OCI-LY7 (cell line): ENCODE measurements at regions of chr14 and their contacts with region 1.

Region 1: GRCh38 chr14:104078031-104078455 is 7.5 kb upstream of the ASPG start:
- DNase-seq: peak; percentile 92
- H3K4me3 ChIP-seq: no peak overlapping the region
- H3K27ac ChIP-seq: no peak overlapping the region
- H3K4me1 ChIP-seq: peaks cover 5% of the 10 kb centered on the region
- CTCF ChIP-seq: peak; percentile 100

Region 2: GRCh38 chr14:104130974-104131651 is 53.1 kb after region 1 on chr14:
- CTCF ChIA-PET with region 1: interaction called, 3 read pairs
- POLR2A ChIA-PET with region 1: no interaction called
- intact Hi-C with region 1: loop called (anchors 1 kb)
- DNase-seq: peak; percentile 54
- H3K4me3 ChIP-seq: no peak overlapping the region
- H3K27ac ChIP-seq: no peak overlapping the region
- H3K4me1 ChIP-seq: no peaks in the 10 kb centered on the region
- CTCF ChIP-seq: peak; percentile 79

Region 3: DNA sequence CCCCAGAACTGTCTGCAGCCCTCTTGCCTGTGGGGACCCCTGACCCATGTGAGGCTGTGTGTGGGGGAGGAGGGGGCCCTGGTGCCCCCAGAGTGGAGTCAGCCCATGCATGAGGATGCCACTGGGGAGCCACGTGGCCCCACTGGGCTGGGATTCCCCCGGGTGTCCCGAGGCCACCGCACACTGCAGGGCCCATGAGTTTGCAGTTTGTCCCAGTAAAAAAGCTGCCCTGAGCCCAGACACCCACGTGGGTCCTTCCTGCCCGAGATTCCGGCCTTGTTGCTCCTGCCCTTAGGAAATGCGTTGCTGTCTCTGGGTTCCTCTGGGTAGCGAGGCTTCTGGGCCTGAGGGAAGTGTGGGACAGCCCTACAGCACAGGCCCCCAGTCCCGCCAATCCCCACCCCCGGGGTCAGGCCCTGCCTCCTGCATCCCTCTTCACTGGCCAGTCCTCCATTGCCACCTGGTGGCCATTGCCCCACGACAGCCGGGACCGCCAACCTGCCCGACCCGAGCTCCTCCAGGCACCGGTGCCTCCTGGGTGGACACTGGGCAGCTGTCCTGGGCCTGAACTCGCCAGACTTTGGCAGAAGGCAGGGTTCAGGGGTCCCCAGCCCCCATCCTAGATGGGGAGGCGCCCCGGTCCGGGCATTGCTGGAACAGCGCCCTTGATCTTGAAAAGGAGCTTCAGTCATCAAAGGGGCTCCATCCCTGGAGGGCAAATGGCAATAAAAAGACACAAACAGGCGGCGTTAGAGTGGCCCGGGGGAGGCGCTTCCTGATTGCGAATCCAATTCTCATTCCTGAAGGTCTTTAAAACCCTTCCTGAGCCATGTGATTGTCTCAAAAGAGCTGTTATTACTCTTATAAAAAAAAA is 485.9 kb after region 1 on chr14:
- CTCF ChIA-PET with region 1: no interaction called
- POLR2A ChIA-PET with region 1: no interaction called
- intact Hi-C with region 1: loop called (anchors 2 kb)
- DNase-seq: peak; percentile 38
- H3K4me3 ChIP-seq: no peak overlapping the region
- H3K27ac ChIP-seq: no peak overlapping the region
- H3K4me1 ChIP-seq: no peaks in the 10 kb centered on the region
- CTCF ChIP-seq: peak; percentile 75

Region 4: DNA sequence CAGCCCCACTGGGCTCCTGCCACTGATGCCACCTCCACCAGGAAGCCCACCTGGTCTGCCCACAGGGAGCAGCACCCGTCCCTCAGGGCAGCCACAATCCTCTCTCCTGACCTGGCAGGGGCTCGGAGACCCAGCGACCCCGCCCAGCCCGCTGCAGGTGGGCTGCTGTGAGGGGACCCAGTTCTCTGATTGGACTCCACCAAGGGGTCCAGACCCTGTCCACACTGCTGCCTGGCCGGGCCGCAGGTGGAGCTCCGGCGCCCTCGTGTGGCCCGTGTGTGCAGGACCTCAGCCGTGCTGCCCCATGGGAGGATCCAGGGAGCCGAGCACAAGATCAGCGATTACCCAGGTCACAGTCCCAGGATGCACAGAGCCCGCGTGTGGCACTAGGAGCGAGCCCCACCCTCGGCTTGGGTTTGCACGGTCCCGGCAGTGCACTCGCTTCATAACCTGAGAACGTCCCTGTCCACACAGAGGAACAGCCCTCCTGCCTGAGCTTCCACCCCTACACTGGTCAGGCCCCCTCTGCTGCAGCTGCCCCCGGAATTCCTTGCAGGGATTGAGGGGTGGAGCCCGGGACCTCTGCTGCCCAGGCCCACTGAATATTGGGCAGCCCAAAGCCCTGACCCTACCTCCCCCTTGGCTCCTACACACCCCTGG is 562.0 kb after region 1 on chr14:
- CTCF ChIA-PET with region 1: no interaction called
- POLR2A ChIA-PET with region 1: no interaction called
- intact Hi-C with region 1: loop called (anchors 10 kb)
- DNase-seq: peak; percentile 69
- H3K4me3 ChIP-seq: no peak overlapping the region
- H3K27ac ChIP-seq: no peak overlapping the region
- H3K4me1 ChIP-seq: no peaks in the 10 kb centered on the region
- CTCF ChIP-seq: peak; percentile 94